ENCODE measurements at regions of chr1 and their contacts with region 1.

Region 1: DNA sequence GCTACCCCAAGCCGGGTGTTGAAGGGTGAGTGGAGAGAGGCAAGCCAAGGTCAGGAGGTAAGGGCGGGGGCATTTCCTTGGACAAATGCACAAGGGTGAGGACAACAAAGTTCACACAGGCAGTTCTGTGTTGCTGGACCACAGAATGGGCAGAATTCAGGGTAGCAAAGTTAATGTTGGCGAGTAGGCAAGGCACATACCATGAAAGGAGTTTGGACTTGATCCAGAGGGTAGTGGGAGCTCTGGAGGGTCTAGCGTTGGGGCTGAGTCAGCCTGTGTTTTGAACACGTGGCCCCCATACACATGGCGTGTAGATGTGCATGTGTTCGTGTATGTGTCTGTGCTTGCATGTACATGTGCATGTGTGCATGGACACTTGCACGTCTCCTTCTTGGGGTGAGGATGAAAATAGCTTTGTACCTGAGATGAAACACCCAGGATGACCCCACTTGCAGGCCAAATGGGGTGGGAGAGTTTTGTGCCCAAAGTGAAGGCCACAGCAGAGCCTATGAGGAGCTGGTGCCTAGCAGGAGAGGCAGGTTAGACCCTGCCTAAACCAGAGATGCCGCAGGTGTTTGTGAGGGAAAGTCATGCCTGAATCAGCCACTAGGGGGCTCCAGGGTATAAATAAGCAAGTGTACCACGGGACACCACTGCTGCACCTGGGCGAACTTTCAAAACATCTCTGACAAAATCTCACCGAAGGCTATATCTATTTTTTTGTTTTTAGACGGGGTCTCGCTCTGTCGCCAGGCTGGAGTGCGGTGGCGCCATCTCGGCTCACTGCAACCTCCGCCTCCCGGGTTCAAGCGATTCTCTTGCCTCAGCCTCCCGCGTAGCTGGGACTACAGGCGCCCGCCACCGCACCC is 21.8 kb downstream of the SLC27A3 start:
- DNase-seq: peak; percentile 76 to 92
- ATAC-seq: peak; percentile 80 to 95 (median 82)
- H3K4me3 ChIP-seq: no peak overlapping the region
- H3K4me3 Mint-ChIP-seq: peak overlapping the region; percentile 56
- H3K27ac ChIP-seq: no peak overlapping the region
- H3K27ac Mint-ChIP-seq: peak overlapping the region in 1 of 2 donors; percentile 79
- H3K4me1 ChIP-seq: peaks cover 44% of the 10 kb centered on the region
- H3K4me1 Mint-ChIP-seq: peaks cover 30 to 49% of the 10 kb centered on the region in 2 donors
- H3K27me3 ChIP-seq: no peaks in the 10 kb centered on the region
- H3K27me3 Mint-ChIP-seq: no peaks in the 10 kb centered on the region
- CTCF ChIP-seq: peak; percentile 82

Region 2: GRCh38 chr1:153633716-153634665 is 163.0 kb before region 1 on chr1 and contains the start of gene CHTOP:
- intact Hi-C with region 1: no loop called
- DNase-seq: peak; percentile 98 to 99
- ATAC-seq: peak; percentile 86 to 97 (median 88)
- H3K4me3 ChIP-seq: peak within 1 kb of the TSS; percentile 72
- H3K4me3 Mint-ChIP-seq: peak within 1 kb of the TSS; percentile 99
- H3K27ac ChIP-seq: peak within 1 kb of the TSS; percentile 91
- H3K27ac Mint-ChIP-seq: peak within 1 kb of the TSS; percentile 98 to 99
- H3K4me1 ChIP-seq: peaks cover 24% of the 10 kb centered on the region
- H3K4me1 Mint-ChIP-seq: peaks cover 24 to 34% of the 10 kb centered on the region in 2 donors
- H3K27me3 ChIP-seq: no peaks in the 10 kb centered on the region
- H3K27me3 Mint-ChIP-seq: no peaks in the 10 kb centered on the region
- CTCF ChIP-seq: no peak
- total RNA-seq, gene CHTOP: 94.7 to 110 (median 106) TPM

Region 3: DNA sequence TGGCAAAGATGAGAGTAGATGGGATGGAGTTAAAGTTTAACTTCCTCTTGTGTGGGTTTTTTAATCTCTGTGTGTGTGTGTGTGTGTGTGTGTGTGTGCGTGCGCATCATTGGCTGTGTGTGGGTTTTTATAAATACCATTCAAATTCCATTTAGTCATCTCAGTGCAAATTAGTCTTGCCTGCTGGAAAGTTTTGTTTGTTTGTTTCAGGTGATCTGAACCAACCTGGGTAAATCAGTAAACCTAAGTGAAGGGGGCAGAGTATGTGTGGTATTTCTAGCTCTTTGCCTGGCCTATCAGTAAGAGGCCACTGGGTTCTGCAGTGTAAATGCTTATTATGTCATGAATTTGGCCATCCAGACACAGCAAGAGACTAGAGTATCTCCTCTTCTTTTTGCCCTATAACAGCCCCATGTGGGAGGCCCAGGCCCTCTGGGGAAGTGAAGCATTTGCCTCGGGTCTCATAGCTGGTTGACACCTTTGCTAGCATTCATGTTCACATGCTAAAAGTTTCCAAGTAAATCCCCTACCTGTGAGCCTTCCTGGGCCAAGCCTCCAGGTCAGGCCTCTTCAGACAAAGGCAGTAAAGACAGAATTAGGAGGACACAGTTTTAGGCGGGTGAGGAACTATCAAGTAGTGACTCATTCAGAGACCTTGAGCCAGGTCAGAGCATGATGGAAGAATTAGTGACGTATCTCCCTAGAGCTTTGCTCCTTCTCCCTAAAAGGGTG is 54.4 kb before region 1 on chr1:
- intact Hi-C with region 1: no loop called
- DNase-seq: no peak
- ATAC-seq: no peak
- H3K4me3 ChIP-seq: no peak overlapping the region
- H3K4me3 Mint-ChIP-seq: no peak overlapping the region
- H3K27ac ChIP-seq: no peak overlapping the region
- H3K27ac Mint-ChIP-seq: peak overlapping the region in 1 of 2 donors; percentile 1
- H3K4me1 ChIP-seq: peaks cover 3% of the 10 kb centered on the region
- H3K4me1 Mint-ChIP-seq: peaks cover 0 to 4% of the 10 kb centered on the region in 2 donors
- H3K27me3 ChIP-seq: no peaks in the 10 kb centered on the region
- H3K27me3 Mint-ChIP-seq: no peaks in the 10 kb centered on the region
- CTCF ChIP-seq: no peak

Region 4: GRCh38 chr1:153946622-153947241 is 149.7 kb after region 1 on chr1 and contains the start of gene DENND4B:
- intact Hi-C with region 1: loop called (anchors 1 kb)
- DNase-seq: peak; percentile 77 to 86
- ATAC-seq: peak; percentile 65 to 79 (median 70)
- H3K4me3 ChIP-seq: peak within 1 kb of the TSS; percentile 89
- H3K4me3 Mint-ChIP-seq: peak within 1 kb of the TSS; percentile 94
- H3K27ac ChIP-seq: peak within 1 kb of the TSS; percentile 98
- H3K27ac Mint-ChIP-seq: peak within 1 kb of the TSS; percentile 92 to 96
- H3K4me1 ChIP-seq: peaks cover 44% of the 10 kb centered on the region
- H3K4me1 Mint-ChIP-seq: peaks cover 39 to 51% of the 10 kb centered on the region in 2 donors
- H3K27me3 ChIP-seq: no peaks in the 10 kb centered on the region
- H3K27me3 Mint-ChIP-seq: no peaks in the 10 kb centered on the region
- CTCF ChIP-seq: peak; percentile 84
- total RNA-seq, gene DENND4B: 244 to 322 (median 291) TPM